ENCODE measurements at regions of chr1 and their contacts with region 1.

Region 1: GRCh38 chr1:51989723-51990477 is 600 bp downstream of the RAB3B start:
- DNase-seq: no peak
- H3K4me3 ChIP-seq: peak overlapping the region; percentile 35 to 84 (median 73)
- H3K27ac ChIP-seq: no peak overlapping the region
- H3K4me1 ChIP-seq: no peaks in the 10 kb centered on the region
- H3K27me3 ChIP-seq: peaks cover 15 to 16% of the 10 kb centered on the region in 2 experiments
- CTCF ChIP-seq: no peak
- POLR2A ChIP-seq: no peak

Region 2: GRCh38 chr1:52179085-52179484 is 189.2 kb after region 1 on chr1:
- CTCF ChIA-PET with region 1: no interaction called
- POLR2A ChIA-PET with region 1: no interaction called
- dilution Hi-C with region 1: no loop called
- intact Hi-C with region 1: loop called (anchors 5 kb)
- DNase-seq: no peak
- H3K4me3 ChIP-seq: no peak overlapping the region
- H3K27ac ChIP-seq: no peak overlapping the region
- H3K4me1 ChIP-seq: no peaks in the 10 kb centered on the region
- H3K27me3 ChIP-seq: no peaks in the 10 kb centered on the region
- CTCF ChIP-seq: no peak
- POLR2A ChIP-seq: no peak